Activated CD4-positive, alpha-beta T cell treated with anti-CD3 and anti-CD28 coated beads for 36 hours (primary cell): ENCODE measurements at regions of chr11 and their contacts with region 1.

Region 1: GRCh38 chr11:9757809-9758636 is 94.1 kb downstream of the SWAP70 start:
- DNase-seq: peak; percentile 97
- ATAC-seq: peak; percentile 47
- H3K4me3 Mint-ChIP-seq: peak overlapping the region; percentile 86
- H3K27ac Mint-ChIP-seq: peak overlapping the region; percentile 89
- H3K4me1 Mint-ChIP-seq: peaks cover 51% of the 10 kb centered on the region
- H3K27me3 Mint-ChIP-seq: no peaks in the 10 kb centered on the region

Region 2: GRCh38 chr11:8682303-8683114 is 1075.5 kb before region 1 on chr11 and contains the starts of genes RPL27A and TRIM66:
- CTCF ChIA-PET with region 1: no interaction called
- POLR2A ChIA-PET with region 1: no interaction called
- intact Hi-C with region 1: loop called in 1 of 2 experiments (anchors 5 kb)
- DNase-seq: peak; percentile 99
- ATAC-seq: peak; percentile 96
- H3K4me3 Mint-ChIP-seq: peak within 1 kb of the TSS; percentile 97
- H3K27ac Mint-ChIP-seq: peak within 1 kb of the TSS; percentile 98
- H3K4me1 Mint-ChIP-seq: peaks cover 46% of the 10 kb centered on the region
- H3K27me3 Mint-ChIP-seq: no peaks in the 10 kb centered on the region
- total RNA-seq, gene RPL27A: 688 to 1,021 TPM
- total RNA-seq, gene TRIM66: 18.3 to 19.5 TPM

Region 3: GRCh38 chr11:9573052-9573774 is 184.8 kb before region 1 on chr11 and contains the start of gene WEE1:
- CTCF ChIA-PET with region 1: interaction called, 4 read pairs
- POLR2A ChIA-PET with region 1: interaction called, 5 read pairs
- intact Hi-C with region 1: loop called in 1 of 2 experiments (anchors 1 kb)
- DNase-seq: peak; percentile 99
- ATAC-seq: peak; percentile 94
- H3K4me3 Mint-ChIP-seq: peak within 1 kb of the TSS; percentile 94
- H3K27ac Mint-ChIP-seq: peak within 1 kb of the TSS; percentile 82
- H3K4me1 Mint-ChIP-seq: peaks cover 33% of the 10 kb centered on the region
- H3K27me3 Mint-ChIP-seq: peaks cover 3% of the 10 kb centered on the region
- total RNA-seq, gene WEE1: 44.8 to 46.5 TPM

Region 4: DNA sequence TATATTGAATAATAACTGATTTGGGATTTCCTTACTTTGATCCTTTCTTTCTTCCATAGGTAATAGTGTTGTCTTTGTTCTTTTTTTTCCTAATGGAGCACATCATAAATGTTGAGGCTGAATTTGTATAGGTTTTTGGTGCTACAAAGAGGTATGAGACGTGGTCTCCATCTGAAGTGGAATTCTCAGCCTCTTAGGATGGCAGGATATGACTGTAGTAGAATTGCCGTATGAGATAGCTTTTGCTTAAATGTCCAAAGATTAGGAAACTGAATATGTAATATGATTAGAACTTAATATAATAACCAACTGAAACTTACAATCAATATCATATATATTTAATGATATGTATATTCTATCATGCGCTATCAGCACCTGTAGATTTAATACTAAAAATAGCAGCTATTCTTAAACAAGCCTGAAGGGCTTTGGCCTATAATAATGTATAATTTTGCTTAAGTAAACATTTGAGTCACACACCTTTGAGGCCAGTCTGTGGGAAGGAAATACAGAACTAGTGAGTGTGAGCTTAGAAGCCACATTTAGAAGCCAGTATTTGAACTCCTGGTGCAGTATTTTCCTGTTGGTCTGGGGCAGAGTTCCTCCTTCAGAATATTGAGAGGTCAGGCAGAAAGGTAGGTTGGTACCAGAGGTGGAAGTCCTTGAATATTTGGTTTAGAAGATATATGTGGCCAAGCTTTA is 31.6 kb before region 1 on chr11:
- CTCF ChIA-PET with region 1: no interaction called
- POLR2A ChIA-PET with region 1: no interaction called
- intact Hi-C with region 1: no loop called
- DNase-seq: no peak
- ATAC-seq: no peak
- H3K4me3 Mint-ChIP-seq: no peak overlapping the region
- H3K27ac Mint-ChIP-seq: no peak overlapping the region
- H3K4me1 Mint-ChIP-seq: no peaks in the 10 kb centered on the region
- H3K27me3 Mint-ChIP-seq: no peaks in the 10 kb centered on the region

Region 5: DNA sequence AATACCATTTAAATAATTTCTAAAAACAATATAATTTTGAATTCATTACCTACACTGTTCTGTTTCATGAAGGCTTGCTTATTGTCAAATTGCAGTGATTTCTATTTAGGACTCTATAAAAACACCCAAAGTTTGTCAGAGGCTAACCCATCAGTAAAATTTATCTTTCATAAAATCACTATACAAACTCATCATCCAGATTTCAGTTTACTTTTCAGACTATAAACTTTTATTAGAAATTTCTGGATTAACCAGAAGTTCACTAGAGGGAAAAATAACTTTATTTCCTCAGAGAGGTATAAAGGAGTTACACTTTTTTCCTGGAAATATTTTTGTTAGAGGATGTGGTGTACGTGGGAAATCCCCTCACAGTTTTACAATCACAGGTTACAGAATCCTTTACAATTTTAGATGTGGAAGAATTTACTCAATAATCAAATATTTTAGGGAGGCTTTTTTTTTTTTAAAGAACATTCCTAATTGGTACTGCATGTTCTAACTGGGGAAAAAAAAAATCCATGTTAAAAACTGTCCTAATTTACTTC is 82.5 kb after region 1 on chr11:
- CTCF ChIA-PET with region 1: interaction called, 5 read pairs
- POLR2A ChIA-PET with region 1: no interaction called
- intact Hi-C with region 1: loop called in 1 of 2 experiments (anchors 5 kb)
- DNase-seq: no peak
- ATAC-seq: no peak
- H3K4me3 Mint-ChIP-seq: no peak overlapping the region
- H3K27ac Mint-ChIP-seq: no peak overlapping the region
- H3K4me1 Mint-ChIP-seq: peaks cover 29% of the 10 kb centered on the region
- H3K27me3 Mint-ChIP-seq: no peaks in the 10 kb centered on the region

Region 6: GRCh38 chr11:10076458-10077141 is 318.6 kb after region 1 on chr11:
- CTCF ChIA-PET with region 1: no interaction called
- POLR2A ChIA-PET with region 1: no interaction called
- intact Hi-C with region 1: loop called in 1 of 2 experiments (anchors 1 kb)
- DNase-seq: peak; percentile 58
- ATAC-seq: peak; percentile 51
- H3K4me3 Mint-ChIP-seq: no peak overlapping the region
- H3K27ac Mint-ChIP-seq: no peak overlapping the region
- H3K4me1 Mint-ChIP-seq: no peaks in the 10 kb centered on the region
- H3K27me3 Mint-ChIP-seq: no peaks in the 10 kb centered on the region

Region 7: DNA sequence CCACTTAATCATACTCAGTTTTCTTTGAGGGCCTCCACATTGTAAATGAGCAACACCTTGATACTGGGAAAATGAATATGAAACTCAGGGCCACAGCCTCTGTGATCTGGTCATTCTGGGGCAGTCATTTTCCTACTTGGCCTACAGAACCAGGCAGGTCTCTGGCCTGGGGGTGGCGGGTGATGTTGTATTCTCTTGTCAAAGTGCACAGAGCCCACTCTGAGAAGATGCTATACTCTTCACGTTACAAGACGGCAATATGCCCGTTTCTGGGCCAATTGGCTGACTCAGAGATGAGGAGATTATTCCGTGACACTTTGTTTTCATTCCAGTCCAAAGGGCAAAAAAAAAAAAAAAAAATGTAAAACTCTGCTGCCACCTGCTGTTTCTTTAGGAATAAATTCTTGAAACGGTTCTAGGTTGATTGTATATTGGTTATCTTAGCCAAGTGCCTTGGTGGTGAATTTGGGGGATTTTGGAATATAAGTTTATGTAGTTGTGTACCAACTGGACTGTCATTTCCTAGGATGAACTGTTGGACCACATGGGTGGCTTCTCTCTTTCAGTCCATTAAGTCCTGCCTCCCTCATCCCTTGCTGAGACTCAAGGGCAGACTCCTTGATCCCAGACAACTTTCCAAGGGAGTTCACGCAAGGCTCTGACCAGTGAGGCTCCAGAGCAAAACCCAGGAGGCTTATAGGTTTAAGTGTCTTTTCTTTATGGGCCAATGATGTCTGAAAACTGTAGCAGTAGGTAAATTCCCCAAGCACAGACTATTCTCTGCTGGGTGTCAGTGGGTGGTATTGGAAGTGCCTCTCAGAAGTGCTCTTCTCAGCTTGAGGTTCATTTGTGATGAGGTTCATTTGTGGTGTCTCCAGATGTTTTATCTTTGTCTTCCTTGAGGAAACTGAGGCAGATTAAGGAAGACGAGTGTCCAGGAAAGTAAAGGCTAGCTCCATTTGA is 565.1 kb after region 1 on chr11:
- CTCF ChIA-PET with region 1: interaction called, 7 read pairs
- POLR2A ChIA-PET with region 1: no interaction called
- intact Hi-C with region 1: loop called (anchors 1 kb)
- DNase-seq: peak; percentile 71
- ATAC-seq: peak; percentile 84
- H3K4me3 Mint-ChIP-seq: peak overlapping the region; percentile 26
- H3K27ac Mint-ChIP-seq: peak overlapping the region; percentile 86
- H3K4me1 Mint-ChIP-seq: peaks cover 16% of the 10 kb centered on the region
- H3K27me3 Mint-ChIP-seq: peaks cover 2% of the 10 kb centered on the region